ENCODE measurements at regions of chr1 and their contacts with region 1.

Region 1: DNA sequence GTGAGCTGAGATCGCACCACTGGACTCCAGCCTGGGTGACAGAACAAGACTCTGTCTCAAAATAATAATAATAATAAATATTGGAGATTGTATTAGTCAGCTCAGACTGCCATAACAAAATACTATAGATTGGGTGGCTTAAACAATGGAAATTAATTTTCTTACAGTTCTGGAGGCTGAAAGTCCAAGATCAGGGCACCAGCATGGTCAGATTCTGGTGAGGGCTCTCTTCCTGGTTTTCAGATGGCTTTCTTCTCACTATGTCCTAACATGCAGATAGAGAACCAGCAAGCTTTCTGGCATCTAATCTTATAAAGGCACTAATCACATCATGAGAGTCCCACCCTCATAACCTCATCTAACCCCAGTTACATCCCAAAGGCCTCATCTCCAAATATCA is 23.2 kb upstream of the DDAH1 start:
- DNase-seq: no peak
- H3K4me3 ChIP-seq: no peak overlapping the region
- H3K27ac ChIP-seq: no peak overlapping the region
- H3K27me3 ChIP-seq: no peaks in the 10 kb centered on the region
- CTCF ChIP-seq: no peak

Region 2: GRCh38 chr1:84944767-84945486 is 543.2 kb before region 1 on chr1:
- CTCF ChIA-PET with region 1: no interaction called
- POLR2A ChIA-PET with region 1: no interaction called
- DNase-seq: peak; percentile 90
- H3K4me3 ChIP-seq: peak overlapping the region; percentile 37
- H3K27ac ChIP-seq: no peak overlapping the region
- H3K27me3 ChIP-seq: peaks cover 8% of the 10 kb centered on the region
- CTCF ChIP-seq: peak; percentile 77

Region 3: GRCh38 chr1:85465099-85465785 is 22.9 kb before region 1 on chr1 and contains the start of gene DDAH1:
- CTCF ChIA-PET with region 1: no interaction called
- POLR2A ChIA-PET with region 1: no interaction called
- DNase-seq: no peak
- H3K4me3 ChIP-seq: peak within 1 kb of the TSS; percentile 82
- H3K27ac ChIP-seq: peak within 1 kb of the TSS; percentile 75
- H3K27me3 ChIP-seq: no peaks in the 10 kb centered on the region
- CTCF ChIP-seq: no peak
- polyA plus RNA-seq, gene DDAH1: 83.7 and 102 TPM in 2 replicates

Region 4: DNA sequence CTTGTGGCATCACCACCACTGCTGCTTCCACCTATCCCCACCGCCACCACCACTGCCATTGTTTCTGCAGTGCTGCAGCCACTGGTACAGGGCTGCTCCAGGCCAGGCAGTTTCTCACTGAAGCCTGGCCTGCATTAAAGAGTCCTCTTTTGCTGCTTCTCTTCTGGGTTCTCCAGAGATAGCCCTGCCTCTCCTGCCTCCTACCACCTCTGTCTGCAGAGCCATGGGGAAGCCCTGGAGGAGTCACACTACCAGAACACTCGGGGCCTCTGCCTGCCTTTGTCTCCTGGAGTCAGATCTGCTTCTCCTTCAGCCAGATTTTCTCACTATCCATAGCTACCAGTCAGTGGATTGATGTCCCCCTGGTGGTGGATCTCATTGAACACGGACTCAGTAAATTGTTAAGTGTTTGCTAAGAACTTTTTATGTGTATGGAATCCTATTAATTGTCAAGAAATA is 14.5 kb after region 1 on chr1:
- CTCF ChIA-PET with region 1: interaction called, 11 read pairs
- POLR2A ChIA-PET with region 1: no interaction called
- DNase-seq: peak; percentile 59
- H3K4me3 ChIP-seq: no peak overlapping the region
- H3K27ac ChIP-seq: peak overlapping the region; percentile 63
- H3K27me3 ChIP-seq: no peaks in the 10 kb centered on the region
- CTCF ChIP-seq: peak; percentile 70